Panc1 (cell line): ENCODE measurements at regions of chr1 and their contacts with region 1.

Region 1: GRCh38 chr1:113747376-113747775 is 11.9 kb downstream of the PHTF1 start:
- DNase-seq: no peak
- ATAC-seq: no peak
- H3K4me3 ChIP-seq: no peak overlapping the region
- H3K27ac ChIP-seq: no peak overlapping the region
- H3K4me1 ChIP-seq: no peaks in the 10 kb centered on the region
- H3K27me3 ChIP-seq: no peaks in the 10 kb centered on the region
- CTCF ChIP-seq: no peak

Region 2: GRCh38 chr1:113758631-113759332 is 11.4 kb after region 1 on chr1:
- CTCF ChIA-PET with region 1: no interaction called
- POLR2A ChIA-PET with region 1: interaction called, 16 read pairs
- in situ Hi-C with region 1: no loop called
- intact Hi-C with region 1: no loop called
- DNase-seq: no peak
- ATAC-seq: peak; percentile 86
- H3K4me3 ChIP-seq: peak overlapping the region; percentile 54 to 79
- H3K27ac ChIP-seq: peak overlapping the region; percentile 93
- H3K4me1 ChIP-seq: peaks cover 6% of the 10 kb centered on the region
- H3K27me3 ChIP-seq: no peaks in the 10 kb centered on the region
- CTCF ChIP-seq: no peak

Region 3: DNA sequence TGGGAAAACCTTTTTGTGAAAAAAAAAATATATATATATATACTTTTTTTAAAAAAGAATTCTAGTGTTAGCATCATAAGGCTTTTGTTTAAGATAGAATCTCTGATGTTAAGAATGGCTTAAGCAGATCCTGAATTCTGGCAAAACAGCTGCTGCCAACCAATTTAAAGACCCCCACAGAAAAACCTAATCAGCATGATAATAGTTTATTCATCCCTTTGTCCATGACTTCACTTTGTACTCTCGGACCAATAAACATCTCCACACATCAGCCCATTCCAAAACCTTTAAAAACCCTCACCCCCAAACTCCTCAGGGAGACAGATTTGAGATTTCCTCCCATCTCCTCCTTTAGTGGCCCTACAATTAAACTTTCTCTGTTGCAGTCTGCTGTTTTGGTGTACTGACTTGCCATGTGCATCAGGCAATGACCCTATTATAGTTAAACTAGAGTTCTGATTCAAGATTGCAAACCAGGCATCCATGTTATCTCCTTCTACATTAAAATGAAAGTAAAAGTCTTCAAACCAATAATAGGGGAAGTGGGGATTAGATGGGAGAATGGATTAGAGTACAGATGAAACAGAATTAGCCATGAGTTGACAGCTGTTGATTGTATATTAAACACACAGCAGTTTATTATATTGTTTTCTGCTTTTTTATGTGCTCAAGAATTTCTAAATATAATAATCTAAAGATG is 21.7 kb after region 1 on chr1:
- CTCF ChIA-PET with region 1: no interaction called
- POLR2A ChIA-PET with region 1: no interaction called
- in situ Hi-C with region 1: no loop called
- intact Hi-C with region 1: no loop called
- DNase-seq: no peak
- ATAC-seq: no peak
- H3K4me3 ChIP-seq: no peak overlapping the region
- H3K27ac ChIP-seq: no peak overlapping the region
- H3K4me1 ChIP-seq: no peaks in the 10 kb centered on the region
- H3K27me3 ChIP-seq: no peaks in the 10 kb centered on the region
- CTCF ChIP-seq: no peak